HEK293 (cell line): ENCODE measurements at regions of chr4 and their contacts with region 1.

Region 1: DNA sequence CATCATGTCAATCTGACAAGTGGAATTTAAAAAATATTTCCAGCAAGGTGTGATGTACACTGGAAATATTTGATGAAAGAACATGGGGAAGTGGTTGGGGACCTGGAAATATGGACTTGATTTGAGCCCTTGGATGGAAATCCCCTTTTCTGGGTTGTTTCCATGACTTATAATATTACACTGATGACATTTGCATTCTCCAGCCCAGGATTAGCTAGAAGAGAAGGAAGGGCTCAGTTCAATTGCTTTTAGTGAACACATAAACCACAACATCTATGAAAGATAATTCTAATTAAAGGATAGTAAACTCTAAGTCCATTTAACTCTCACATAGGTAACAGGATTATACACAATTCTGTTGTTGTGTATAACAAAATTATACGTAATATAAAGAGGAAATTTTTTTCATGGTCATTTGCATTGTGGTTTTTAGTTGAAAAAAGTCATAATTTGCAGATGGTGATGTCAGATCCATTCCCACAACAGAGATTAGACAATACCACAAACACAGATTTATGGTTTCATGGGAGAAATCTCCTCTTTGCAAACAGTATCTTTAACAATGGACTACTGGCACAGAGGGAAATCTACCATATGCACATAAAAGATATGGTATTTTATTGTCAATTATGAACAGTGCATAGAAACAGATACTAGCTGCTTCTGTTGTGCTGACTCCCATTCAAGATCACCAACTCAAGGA is 126.5 kb downstream of the DKK2 start:
- H3K4me3 ChIP-seq: no peak overlapping the region
- H3K27ac ChIP-seq: no peak overlapping the region
- H3K4me1 ChIP-seq: no peaks in the 10 kb centered on the region
- CTCF ChIP-seq: no peak

Region 2: DNA sequence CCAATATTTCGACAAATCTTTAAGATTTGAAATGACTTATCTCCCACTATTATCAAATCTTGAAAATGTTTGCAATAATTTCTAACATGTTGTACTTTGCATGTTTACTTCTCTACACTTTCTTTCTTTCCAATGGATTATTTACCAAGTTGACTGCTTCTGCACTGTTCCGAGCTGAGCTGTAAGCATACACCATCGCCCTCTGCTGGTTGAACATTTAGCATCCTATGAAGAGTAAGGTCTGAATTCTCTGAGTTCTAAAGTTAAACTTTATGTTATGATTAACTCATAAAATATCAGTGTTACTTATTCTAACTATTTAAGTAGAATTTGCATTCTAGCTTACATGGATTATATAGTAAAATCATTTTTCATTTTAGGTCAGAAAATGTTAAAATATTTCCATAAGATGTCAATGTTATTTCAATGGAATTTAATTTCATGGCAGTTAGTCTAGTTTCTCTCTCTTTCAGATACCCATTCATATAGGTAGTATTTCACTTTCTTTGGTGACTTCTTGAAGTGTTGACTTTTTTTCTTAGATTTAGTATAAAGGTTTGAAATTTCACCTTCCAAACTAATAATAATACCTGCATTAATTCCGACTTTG is 10.9 kb before region 1 on chr4:
- CTCF ChIA-PET with region 1: interaction called, 12 read pairs
- POLR2A ChIA-PET with region 1: no interaction called
- H3K4me3 ChIP-seq: no peak overlapping the region
- H3K27ac ChIP-seq: no peak overlapping the region
- H3K4me1 ChIP-seq: no peaks in the 10 kb centered on the region
- CTCF ChIP-seq: no peak